ENCODE measurements at regions of chr16 and their contacts with region 1.

Region 1: GRCh38 chr16:80526425-80527061 is 14.2 kb upstream of the DYNLRB2 start:
- DNase-seq: peak; percentile 72
- ATAC-seq: peak; percentile 57
- H3K4me3 Mint-ChIP-seq: no peak overlapping the region
- H3K27ac Mint-ChIP-seq: no peak overlapping the region
- H3K4me1 Mint-ChIP-seq: peaks cover 11% of the 10 kb centered on the region
- H3K27me3 Mint-ChIP-seq: peaks cover 26% of the 10 kb centered on the region

Region 2: GRCh38 chr16:80466024-80466987 is 60.2 kb before region 1 on chr16:
- CTCF ChIA-PET with region 1: interaction called, 11 read pairs
- POLR2A ChIA-PET with region 1: no interaction called
- DNase-seq: peak; percentile 63
- ATAC-seq: peak; percentile 76
- H3K4me3 Mint-ChIP-seq: no peak overlapping the region
- H3K27ac Mint-ChIP-seq: no peak overlapping the region
- H3K4me1 Mint-ChIP-seq: no peaks in the 10 kb centered on the region
- H3K27me3 Mint-ChIP-seq: no peaks in the 10 kb centered on the region

Region 3: GRCh38 chr16:80564394-80564793 is 37.9 kb after region 1 on chr16:
- CTCF ChIA-PET with region 1: interaction called, 25 read pairs
- POLR2A ChIA-PET with region 1: no interaction called
- DNase-seq: peak; percentile 42
- ATAC-seq: peak; percentile 60
- H3K4me3 Mint-ChIP-seq: no peak overlapping the region
- H3K27ac Mint-ChIP-seq: peak overlapping the region; percentile 56
- H3K4me1 Mint-ChIP-seq: peaks cover 36% of the 10 kb centered on the region
- H3K27me3 Mint-ChIP-seq: peaks cover 3% of the 10 kb centered on the region

Region 4: DNA sequence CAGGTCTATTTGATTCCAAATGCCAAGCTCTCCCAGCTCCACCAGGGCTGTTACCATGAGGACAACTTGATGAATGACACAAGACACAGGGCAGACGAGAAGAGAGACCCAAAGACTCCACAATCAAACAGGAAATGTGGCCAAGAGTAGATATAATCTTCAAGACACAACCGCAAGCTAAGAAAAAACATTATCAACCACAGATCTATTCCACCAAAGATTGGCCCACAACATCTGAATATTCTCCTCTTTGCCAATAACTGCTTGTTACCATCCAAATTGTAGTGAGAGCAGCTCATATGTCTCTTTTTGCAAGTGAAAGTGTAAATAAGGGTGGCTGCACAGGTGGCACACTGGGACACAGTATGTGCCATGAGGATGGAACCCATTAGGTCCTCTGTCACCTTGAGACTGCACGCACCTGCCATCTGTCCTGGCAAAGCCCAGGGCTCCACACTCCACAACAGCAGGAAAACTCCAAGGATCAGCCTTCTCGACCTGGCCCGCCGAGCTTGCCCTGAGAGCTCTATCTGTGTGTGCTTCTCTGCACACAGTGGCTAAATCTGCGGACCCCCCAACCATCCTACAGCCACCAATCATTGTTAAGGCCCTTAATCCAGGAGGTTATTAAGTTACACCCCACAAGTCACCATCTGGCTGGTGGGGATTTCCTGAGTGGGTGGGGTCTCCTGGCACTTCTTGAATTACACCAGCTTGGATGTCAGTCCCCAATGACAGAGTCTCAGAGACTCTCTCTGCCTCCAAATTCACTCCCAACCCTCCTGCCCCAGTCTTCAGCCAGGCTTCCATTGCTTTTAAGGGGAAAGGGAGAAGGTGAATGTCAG is 64.8 kb after region 1 on chr16:
- CTCF ChIA-PET with region 1: interaction called, 36 read pairs
- POLR2A ChIA-PET with region 1: no interaction called
- DNase-seq: peak; percentile 67
- ATAC-seq: peak; percentile 95
- H3K4me3 Mint-ChIP-seq: peak overlapping the region; percentile 26
- H3K27ac Mint-ChIP-seq: peak overlapping the region; percentile 58
- H3K4me1 Mint-ChIP-seq: peaks cover 34% of the 10 kb centered on the region
- H3K27me3 Mint-ChIP-seq: peaks cover 51% of the 10 kb centered on the region

Region 5: GRCh38 chr16:80720804-80721371 is 194.3 kb after region 1 on chr16:
- CTCF ChIA-PET with region 1: interaction called, 10 read pairs
- POLR2A ChIA-PET with region 1: no interaction called
- DNase-seq: no peak
- ATAC-seq: no peak
- H3K4me3 Mint-ChIP-seq: no peak overlapping the region
- H3K27ac Mint-ChIP-seq: no peak overlapping the region
- H3K4me1 Mint-ChIP-seq: peaks cover 11% of the 10 kb centered on the region
- H3K27me3 Mint-ChIP-seq: no peaks in the 10 kb centered on the region

Region 6: DNA sequence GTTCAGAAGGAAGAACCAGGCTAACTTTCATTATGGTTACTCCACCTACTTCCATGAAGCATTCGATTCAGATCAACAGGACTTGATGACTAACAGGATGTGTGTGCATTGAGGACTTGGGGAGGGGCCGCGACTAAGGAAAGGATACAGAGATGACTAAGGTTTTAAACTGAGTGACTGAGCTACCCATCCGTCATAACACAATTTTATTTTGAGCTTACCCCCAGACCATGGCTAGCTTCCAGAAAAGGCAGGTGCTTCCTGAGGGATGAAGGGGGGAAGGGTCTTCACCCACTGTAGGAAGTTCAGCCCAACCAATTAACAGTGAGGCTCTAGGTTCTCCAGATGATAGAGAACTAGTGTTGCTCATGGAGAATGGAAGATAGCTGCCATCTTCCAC is 280.4 kb after region 1 on chr16:
- CTCF ChIA-PET with region 1: interaction called, 37 read pairs
- POLR2A ChIA-PET with region 1: no interaction called
- DNase-seq: peak; percentile 67
- ATAC-seq: peak; percentile 17
- H3K4me3 Mint-ChIP-seq: no peak overlapping the region
- H3K27ac Mint-ChIP-seq: peak overlapping the region; percentile 64
- H3K4me1 Mint-ChIP-seq: peaks cover 26% of the 10 kb centered on the region
- H3K27me3 Mint-ChIP-seq: peaks cover 11% of the 10 kb centered on the region

Measured in activated CD8-positive, alpha-beta T cell treated with anti-CD3 and anti-CD28 coated beads, Interleukin-2, amount 10 ng/mL, durations not matched to agents 7 days and 5 days (primary cell).